Posterior vena cava (tissue), 2 donors: ENCODE measurements at regions of chr5 and their contacts with region 1.

Region 1: DNA sequence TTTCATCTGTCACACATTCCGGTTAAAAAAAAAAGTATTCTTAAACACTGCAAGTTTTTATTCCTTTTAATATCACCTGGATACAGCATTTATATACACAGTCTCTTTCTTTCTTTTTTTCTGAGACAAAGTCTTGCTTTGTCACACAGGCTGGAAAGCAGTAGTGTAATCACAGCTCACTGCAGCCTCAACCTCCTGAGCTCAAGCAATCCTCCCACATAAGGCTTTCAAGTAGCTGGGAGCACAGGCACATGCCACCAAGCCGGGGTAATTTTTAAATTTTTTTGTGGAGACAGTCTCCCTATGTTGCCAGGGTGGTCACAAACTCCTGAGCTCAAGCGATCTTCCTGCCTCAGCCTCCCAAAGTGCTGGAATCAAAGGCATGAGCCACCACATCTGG is 13.9 kb downstream of the KIF20A start:
- DNase-seq: no peak

Region 2: DNA sequence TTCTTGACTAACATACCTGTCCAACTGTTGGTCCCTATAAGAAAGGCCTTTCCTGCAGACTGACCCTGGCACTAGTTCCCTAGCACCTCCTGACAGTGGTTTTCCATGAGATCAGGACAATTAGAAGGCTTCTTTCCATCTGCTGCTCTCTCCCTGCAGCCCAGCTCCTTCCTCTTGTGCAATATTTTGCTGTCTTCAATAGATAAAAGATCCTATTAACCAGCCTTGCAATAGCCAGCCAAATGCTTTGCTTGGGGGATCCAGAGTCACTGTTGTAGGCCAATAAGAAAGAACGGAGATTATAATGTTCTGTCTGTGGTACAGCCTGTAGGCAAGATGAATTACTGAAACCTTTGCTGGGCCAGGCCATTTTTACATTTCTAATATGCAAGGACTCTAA is 35.2 kb before region 1 on chr5:
- intact Hi-C with region 1: loop called in 1 of 2 experiments (anchors 2 kb)
- DNase-seq: no peak

Region 3: DNA sequence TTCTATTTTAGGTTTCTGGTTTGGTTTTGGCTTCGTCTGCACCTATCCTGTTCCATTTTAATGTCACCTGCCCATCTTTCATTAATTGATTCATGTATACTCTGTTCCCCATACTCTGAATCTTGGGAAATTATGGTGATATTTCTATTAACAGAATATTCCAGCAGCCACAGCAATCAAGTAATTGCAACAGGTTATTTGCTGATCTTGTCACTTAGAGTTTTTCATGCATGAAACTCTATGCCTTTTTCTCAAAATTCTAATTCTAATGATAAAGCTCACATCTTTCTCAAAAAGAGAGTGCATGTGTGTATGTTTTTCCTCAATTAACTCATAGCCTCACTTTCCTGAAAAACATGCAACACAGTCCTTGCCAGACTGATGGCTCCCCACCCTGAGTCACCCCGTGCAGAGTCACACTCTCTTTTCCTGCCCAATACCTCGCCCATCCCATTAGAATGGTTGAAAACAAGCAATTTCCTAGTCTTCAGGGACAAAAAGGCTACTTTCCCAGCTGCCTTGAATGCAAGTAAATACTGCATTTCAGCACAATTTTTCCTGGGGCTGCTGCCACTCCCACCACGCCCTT is 66.0 kb after region 1 on chr5:
- intact Hi-C with region 1: no loop called
- DNase-seq: peak; percentile 19